IMR-90 (cell line): ENCODE measurements at regions of chr5 and their contacts with region 1.

Region 1: GRCh38 chr5:95858661-95859326 is 36.3 kb upstream of the GLRX start:
- DNase-seq: peak; percentile 100
- ATAC-seq: peak; percentile 80
- H3K4me3 ChIP-seq: peak overlapping the region; percentile 2; the same call in 1 of the 2 replicates
- H3K27ac ChIP-seq: peak overlapping the region; percentile 99
- H3K4me1 ChIP-seq: peaks cover 38% of the 10 kb centered on the region
- H3K27me3 ChIP-seq: no peaks in the 10 kb centered on the region
- CTCF ChIP-seq: peak; percentile 99
- POLR2A ChIP-seq: peak; percentile 42; the same call in 1 of the 2 replicates
- RAD21 ChIP-seq: peak; percentile 98

Region 2: DNA sequence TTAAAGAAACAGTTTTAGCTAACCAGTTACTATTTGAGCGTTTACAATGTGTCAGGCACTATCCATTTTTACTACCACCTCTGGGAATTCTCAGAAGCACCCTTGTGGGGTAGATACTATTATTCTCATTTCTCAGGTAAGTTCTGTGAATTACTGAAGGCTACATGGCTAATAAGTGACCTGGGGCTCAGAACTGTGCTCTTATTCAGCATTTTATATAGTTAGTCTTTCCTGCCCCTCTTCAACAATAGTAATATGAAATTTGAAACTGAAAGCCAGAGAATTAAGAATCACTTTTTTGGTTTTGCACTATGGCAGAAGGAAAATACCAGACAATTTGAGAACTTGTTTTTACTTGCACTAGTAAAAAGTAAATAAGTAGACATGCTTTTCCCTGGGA is 91.0 kb after region 1 on chr5:
- CTCF ChIA-PET with region 1: no interaction called
- POLR2A ChIA-PET with region 1: no interaction called
- dilution Hi-C with region 1: no loop called
- in situ Hi-C with region 1: loop called (anchors 5 kb)
- intact Hi-C with region 1: no loop called
- DNase-seq: no peak
- ATAC-seq: no peak
- H3K4me3 ChIP-seq: no peak overlapping the region
- H3K27ac ChIP-seq: no peak overlapping the region
- H3K4me1 ChIP-seq: peaks cover 21% of the 10 kb centered on the region
- H3K27me3 ChIP-seq: no peaks in the 10 kb centered on the region
- CTCF ChIP-seq: no peak
- POLR2A ChIP-seq: no peak
- RAD21 ChIP-seq: no peak

Region 3: DNA sequence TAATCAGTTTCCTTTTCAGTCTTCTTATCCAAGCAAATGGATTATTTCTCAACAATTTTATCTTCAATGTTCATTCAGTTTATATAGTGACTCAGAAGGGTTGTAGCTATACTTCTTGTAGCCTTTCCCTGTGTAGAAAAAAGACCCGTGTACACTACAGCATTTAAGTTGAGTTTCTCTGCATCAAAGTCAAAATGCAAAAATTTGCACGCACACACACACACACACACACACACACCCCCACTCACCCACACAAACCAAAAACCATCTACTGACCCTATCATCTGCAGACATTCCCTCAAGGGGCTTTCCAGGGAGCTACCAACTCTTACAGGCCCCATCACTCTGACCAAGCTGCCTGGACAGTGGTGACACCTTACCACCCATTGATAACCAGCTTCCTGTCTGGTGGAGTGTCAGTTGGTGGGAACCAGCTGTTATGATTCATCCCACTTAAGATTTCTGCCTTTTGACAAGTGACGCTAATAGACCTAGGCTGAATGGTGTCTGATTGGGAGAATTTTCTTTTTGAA is 115.1 kb after region 1 on chr5:
- CTCF ChIA-PET with region 1: no interaction called
- POLR2A ChIA-PET with region 1: no interaction called
- dilution Hi-C with region 1: no loop called
- in situ Hi-C with region 1: no loop called
- intact Hi-C with region 1: no loop called
- DNase-seq: peak; percentile 92
- ATAC-seq: peak; percentile 85
- H3K4me3 ChIP-seq: no peak overlapping the region
- H3K27ac ChIP-seq: peak overlapping the region; percentile 70
- H3K4me1 ChIP-seq: peaks cover 13% of the 10 kb centered on the region
- H3K27me3 ChIP-seq: no peaks in the 10 kb centered on the region
- CTCF ChIP-seq: no peak
- POLR2A ChIP-seq: no peak
- RAD21 ChIP-seq: no peak

Region 4: GRCh38 chr5:96067894-96068614 is 209.3 kb after region 1 on chr5:
- CTCF ChIA-PET with region 1: no interaction called
- POLR2A ChIA-PET with region 1: no interaction called
- dilution Hi-C with region 1: no loop called
- in situ Hi-C with region 1: no loop called
- intact Hi-C with region 1: loop called (anchors 5 kb)
- DNase-seq: peak; percentile 95
- ATAC-seq: peak; percentile 80
- H3K4me3 ChIP-seq: no peak overlapping the region
- H3K27ac ChIP-seq: peak overlapping the region; percentile 89
- H3K4me1 ChIP-seq: peaks cover 22% of the 10 kb centered on the region
- H3K27me3 ChIP-seq: no peaks in the 10 kb centered on the region
- CTCF ChIP-seq: no peak
- POLR2A ChIP-seq: peak; percentile 43; the same call in 1 of the 2 replicates
- RAD21 ChIP-seq: peak; percentile 10; the same call in 1 of the 2 replicates

Region 5: DNA sequence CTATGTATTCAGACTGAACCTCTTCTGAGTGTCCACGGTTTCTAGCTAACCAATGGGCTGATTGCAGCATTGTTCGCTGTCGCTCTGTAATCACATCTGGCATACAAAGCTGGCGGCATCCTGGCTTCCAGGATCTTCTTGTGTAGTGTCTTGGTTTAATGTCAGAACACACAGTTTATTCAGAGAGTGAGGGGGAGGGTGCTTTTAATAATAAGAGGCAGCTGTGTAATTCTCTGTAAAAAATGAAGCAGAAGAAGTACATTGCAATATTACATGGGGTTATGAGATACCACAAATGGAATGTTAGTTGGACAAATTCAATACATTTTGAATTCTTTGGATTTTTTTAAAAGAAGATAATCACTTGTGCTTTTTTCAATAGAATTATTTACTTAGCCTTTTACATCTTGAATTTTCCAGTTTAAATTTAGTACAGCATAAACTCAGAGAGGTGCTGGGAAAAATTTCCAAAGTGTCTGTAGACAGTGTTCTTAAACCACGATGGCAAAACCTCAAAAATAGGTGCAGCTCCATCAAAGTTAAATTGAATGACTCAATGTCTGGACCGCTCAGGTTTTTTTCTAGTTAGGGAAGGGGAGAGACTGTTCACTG is 368.3 kb after region 1 on chr5:
- CTCF ChIA-PET with region 1: interaction called, 3 read pairs
- POLR2A ChIA-PET with region 1: no interaction called
- dilution Hi-C with region 1: no loop called
- in situ Hi-C with region 1: no loop called
- intact Hi-C with region 1: loop called (anchors 5 kb)
- DNase-seq: peak; percentile 97
- ATAC-seq: peak; percentile 97
- H3K4me3 ChIP-seq: no peak overlapping the region
- H3K27ac ChIP-seq: peak overlapping the region; percentile 100
- H3K4me1 ChIP-seq: peaks cover 9% of the 10 kb centered on the region
- H3K27me3 ChIP-seq: no peaks in the 10 kb centered on the region
- CTCF ChIP-seq: no peak
- POLR2A ChIP-seq: no peak
- RAD21 ChIP-seq: peak; percentile 8; the same call in 1 of the 2 replicates

Region 6: DNA sequence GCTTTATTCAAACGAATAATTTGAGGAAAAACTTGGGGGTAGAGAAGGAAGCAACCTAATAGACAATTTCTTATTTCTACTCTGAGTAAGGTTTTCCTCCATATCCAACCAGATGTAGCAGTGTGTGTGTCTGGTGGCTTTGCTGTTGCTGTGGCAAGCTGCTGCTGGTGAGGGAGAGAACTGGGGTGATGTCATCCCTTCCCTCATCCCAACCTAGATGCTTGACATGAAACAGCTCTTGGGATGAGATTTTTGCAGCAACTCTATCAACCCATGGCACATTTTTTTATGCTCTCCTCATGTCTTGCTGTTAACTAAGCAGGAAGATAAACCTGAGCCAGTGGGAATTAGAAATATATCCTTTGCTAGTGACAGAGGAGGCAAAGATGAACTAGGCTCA is 438.5 kb after region 1 on chr5:
- CTCF ChIA-PET with region 1: no interaction called
- POLR2A ChIA-PET with region 1: no interaction called
- dilution Hi-C with region 1: no loop called
- in situ Hi-C with region 1: no loop called
- intact Hi-C with region 1: loop called (anchors 2 kb)
- DNase-seq: peak; percentile 98
- ATAC-seq: peak; percentile 64
- H3K4me3 ChIP-seq: no peak overlapping the region
- H3K27ac ChIP-seq: peak overlapping the region; percentile 53; the same call in 1 of the 2 replicates
- H3K4me1 ChIP-seq: peaks cover 8% of the 10 kb centered on the region
- H3K27me3 ChIP-seq: no peaks in the 10 kb centered on the region
- CTCF ChIP-seq: no peak
- POLR2A ChIP-seq: peak; percentile 63; the same call in 1 of the 2 replicates
- RAD21 ChIP-seq: peak; percentile 36; the same call in 1 of the 2 replicates

Region 7: DNA sequence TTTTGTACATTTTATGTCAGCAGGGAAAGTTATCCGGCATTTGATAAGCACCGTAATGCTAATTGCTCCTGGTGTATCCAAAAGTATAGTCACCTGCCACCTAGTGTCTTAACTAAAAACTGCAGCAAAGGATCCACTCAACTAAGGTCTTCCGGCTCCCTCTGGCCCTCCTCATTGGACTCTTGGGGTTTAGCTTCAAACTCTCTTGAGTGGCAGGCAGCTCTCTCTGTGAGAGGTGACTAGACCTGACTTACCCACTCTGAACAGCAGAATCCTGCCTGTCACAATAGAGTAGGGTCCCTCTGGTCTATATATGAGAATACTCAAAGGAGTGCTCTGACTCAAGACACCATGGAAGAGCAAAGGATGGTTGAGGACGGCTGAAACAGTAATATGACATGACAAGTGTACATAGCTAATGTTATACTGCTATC is 743.0 kb after region 1 on chr5:
- CTCF ChIA-PET with region 1: no interaction called
- POLR2A ChIA-PET with region 1: no interaction called
- dilution Hi-C with region 1: no loop called
- in situ Hi-C with region 1: loop called (anchors 10 kb)
- intact Hi-C with region 1: loop called (anchors 1 kb)
- DNase-seq: peak; percentile 75
- ATAC-seq: peak; percentile 86
- H3K4me3 ChIP-seq: no peak overlapping the region
- H3K27ac ChIP-seq: no peak overlapping the region
- H3K4me1 ChIP-seq: no peaks in the 10 kb centered on the region
- H3K27me3 ChIP-seq: no peaks in the 10 kb centered on the region
- CTCF ChIP-seq: peak; percentile 80
- POLR2A ChIP-seq: no peak
- RAD21 ChIP-seq: peak; percentile 82